ENCODE measurements at regions of chr5 and their contacts with region 1.

Region 1: GRCh38 chr5:10262121-10262774 is 12.2 kb downstream of the CCT5 start:
- DNase-seq: no peak
- H3K4me3 Mint-ChIP-seq: no peak overlapping the region
- H3K27ac Mint-ChIP-seq: no peak overlapping the region
- H3K4me1 Mint-ChIP-seq: peaks cover 11% of the 10 kb centered on the region
- H3K27me3 Mint-ChIP-seq: no peaks in the 10 kb centered on the region
- CTCF ChIP-seq: no peak

Region 2: DNA sequence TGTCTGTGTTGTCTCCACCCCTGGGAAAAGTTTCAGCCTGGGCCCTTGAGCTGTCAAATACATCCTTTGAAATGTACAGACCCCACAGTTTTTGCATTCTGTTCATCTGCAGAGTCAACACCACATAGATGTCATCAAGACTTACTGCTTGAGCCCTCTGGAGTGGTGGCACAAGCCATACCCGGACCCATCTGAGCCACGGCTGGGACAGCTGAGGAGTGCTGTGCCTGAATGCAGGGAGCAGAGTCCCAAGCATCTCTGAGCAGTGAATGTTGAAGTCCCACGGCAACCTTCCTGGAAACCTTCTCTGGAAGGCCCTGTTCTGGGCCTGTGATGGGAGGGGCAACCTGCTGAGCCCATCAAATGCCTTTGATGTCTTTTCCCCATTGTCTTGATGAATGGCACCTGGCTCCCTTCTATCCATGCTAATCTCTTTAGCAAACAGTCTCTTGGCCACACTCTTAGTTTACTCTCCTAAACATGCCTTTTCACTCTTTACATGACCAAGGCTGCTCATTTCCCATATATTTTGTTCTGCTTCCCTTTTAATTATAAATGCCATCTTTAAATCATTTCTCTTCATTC is 105.1 kb before region 1 on chr5:
- CTCF ChIA-PET with region 1: no interaction called
- POLR2A ChIA-PET with region 1: no interaction called
- intact Hi-C with region 1: no loop called
- DNase-seq: no peak
- H3K4me3 Mint-ChIP-seq: no peak overlapping the region
- H3K27ac Mint-ChIP-seq: no peak overlapping the region
- H3K4me1 Mint-ChIP-seq: no peaks in the 10 kb centered on the region
- H3K27me3 Mint-ChIP-seq: peaks cover 7% of the 10 kb centered on the region
- CTCF ChIP-seq: no peak

Region 3: DNA sequence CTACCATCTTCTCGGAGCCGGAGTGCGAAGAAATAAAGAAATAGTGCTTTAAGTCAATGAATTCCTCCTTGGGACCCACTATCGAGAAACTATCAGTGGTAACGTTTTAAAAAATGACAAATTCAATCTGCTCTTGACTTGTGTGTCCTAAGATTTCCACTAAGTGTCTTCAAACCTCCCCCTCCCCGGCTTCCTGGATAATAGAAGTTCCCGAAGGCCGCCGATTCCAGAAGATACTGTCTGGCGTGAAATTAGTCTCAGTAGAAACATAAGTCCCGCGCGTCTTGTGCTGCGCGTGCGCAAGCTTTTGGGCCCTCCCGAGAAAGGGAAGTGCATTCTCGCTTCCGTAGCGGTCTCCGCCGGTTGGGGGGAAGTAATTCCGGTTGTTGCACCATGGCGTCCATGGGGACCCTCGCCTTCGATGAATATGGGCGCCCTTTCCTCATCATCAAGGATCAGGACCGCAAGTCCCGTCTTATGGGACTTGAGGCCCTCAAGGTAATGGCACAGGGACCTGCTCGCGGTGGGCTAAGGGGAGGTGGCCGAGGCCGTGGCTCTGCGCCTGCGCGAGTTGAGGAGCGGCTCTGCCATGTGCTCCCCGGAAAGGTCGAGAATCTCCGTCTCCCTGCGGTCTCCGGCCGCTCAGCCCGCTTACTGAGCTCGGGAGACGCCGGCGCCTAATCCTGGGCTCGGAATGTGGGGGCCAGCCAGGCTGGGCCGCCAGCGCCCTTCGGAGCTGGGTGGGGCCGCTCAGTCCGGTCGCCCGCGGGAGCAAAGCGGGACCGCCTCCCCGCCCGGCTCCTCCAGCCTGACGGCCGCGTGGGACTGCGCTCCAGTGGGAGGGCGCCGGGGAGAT is 12.1 kb before region 1 on chr5 and contains the start of gene CCT5:
- CTCF ChIA-PET with region 1: interaction called, 6 read pairs
- POLR2A ChIA-PET with region 1: interaction called, 19 read pairs
- intact Hi-C with region 1: loop called (anchors 1 kb)
- DNase-seq: peak; percentile 98
- H3K4me3 Mint-ChIP-seq: peak within 1 kb of the TSS; percentile 84
- H3K27ac Mint-ChIP-seq: peak within 1 kb of the TSS; percentile 100
- H3K4me1 Mint-ChIP-seq: peaks cover 24% of the 10 kb centered on the region
- H3K27me3 Mint-ChIP-seq: no peaks in the 10 kb centered on the region
- CTCF ChIP-seq: no peak
- total RNA-seq, gene CCT5: 220 and 322 TPM in 2 replicates

Measured in MCF 10A (cell line).